ENCODE measurements at regions of chr11 and their contacts with region 1.

Region 1: GRCh38 chr11:65477149-65477965 is 21.5 kb upstream of the MALAT1 start:
- DNase-seq: peak; percentile 96 to 98 (median 96)
- H3K4me3 ChIP-seq: peak overlapping the region; percentile 81 to 88 (median 82)
- H3K4me3 Mint-ChIP-seq: peak overlapping the region; percentile 93 to 94
- H3K27ac ChIP-seq: peak overlapping the region; percentile 97 to 100
- H3K27ac Mint-ChIP-seq: peak overlapping the region; percentile 98 to 100 (median 99)
- H3K4me1 ChIP-seq: peaks cover 39 to 50% of the 10 kb centered on the region in 2 donors
- H3K4me1 Mint-ChIP-seq: peaks cover 37% of the 10 kb centered on the region
- H3K27me3 ChIP-seq: no peaks in the 10 kb centered on the region
- H3K27me3 Mint-ChIP-seq: peaks cover 0 to 7% (median 2%) of the 10 kb centered on the region in 3 donors
- CTCF ChIP-seq: no peak

Region 2: GRCh38 chr11:65491614-65492386 is 14.4 kb after region 1 on chr11:
- intact Hi-C with region 1: loop called (anchors 2 kb)
- DNase-seq: peak; percentile 64 to 89 (median 81)
- H3K4me3 ChIP-seq: peak overlapping the region in 1 of 3 experiments; percentile 54
- H3K4me3 Mint-ChIP-seq: peak overlapping the region; percentile 75 to 83
- H3K27ac ChIP-seq: peak overlapping the region; percentile 96 to 97
- H3K27ac Mint-ChIP-seq: peak overlapping the region in 6 of 7 donors; percentile 96 to 99 (median 99)
- H3K4me1 ChIP-seq: peaks cover 84 to 95% of the 10 kb centered on the region in 2 donors
- H3K4me1 Mint-ChIP-seq: peaks cover 79% of the 10 kb centered on the region
- H3K27me3 ChIP-seq: no peaks in the 10 kb centered on the region
- H3K27me3 Mint-ChIP-seq: peaks cover 0 to 3% (median 2%) of the 10 kb centered on the region in 3 donors
- CTCF ChIP-seq: no peak

Region 3: DNA sequence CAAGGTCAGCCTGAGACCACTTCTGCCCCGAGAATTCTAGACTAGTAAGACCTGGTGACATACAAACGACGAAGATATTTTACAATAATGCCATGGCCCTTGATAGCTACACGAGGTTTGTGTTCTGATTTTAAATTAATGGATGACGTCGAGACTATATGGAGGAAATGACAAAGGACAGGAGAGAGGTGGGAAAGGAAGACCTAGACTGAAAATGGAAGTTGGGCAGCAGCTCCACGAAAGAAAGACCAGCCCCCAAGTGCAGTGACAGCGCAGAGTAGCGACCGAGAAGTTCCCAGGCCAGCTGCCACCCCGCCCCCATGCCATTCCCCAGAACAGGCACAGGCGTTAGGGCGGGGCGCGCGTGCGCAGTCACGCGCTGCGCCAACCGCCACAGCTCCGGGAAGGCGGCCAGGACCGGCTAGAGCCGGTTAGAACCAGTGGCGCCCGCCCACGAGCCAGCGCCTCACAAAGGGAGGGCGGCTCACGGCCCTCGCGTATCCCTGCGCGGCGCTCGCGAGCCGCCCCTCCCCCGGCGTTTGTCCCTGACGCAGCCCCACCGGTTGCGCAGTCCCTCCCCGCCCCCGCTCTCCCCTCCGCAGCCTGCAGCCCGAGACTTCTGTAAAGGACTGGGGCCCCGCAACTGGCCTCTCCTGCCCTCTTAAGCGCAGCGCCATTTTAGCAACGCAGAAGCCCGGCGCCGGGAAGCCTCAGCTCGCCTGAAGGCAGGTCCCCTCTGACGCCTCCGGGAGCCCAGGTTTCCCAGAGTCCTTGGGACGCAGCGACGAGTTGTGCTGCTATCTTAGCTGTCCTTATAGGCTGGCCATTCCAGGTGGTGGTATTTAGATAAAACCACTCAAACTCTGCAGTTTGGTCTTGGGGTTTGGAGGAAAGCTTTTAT is 20.0 kb after region 1 on chr11:
- intact Hi-C with region 1: loop called (anchors 2 kb)
- DNase-seq: peak; percentile 99
- H3K4me3 ChIP-seq: peak overlapping the region; percentile 96 to 100 (median 99)
- H3K4me3 Mint-ChIP-seq: peak overlapping the region; percentile 82 to 90
- H3K27ac ChIP-seq: peak overlapping the region; percentile 98
- H3K27ac Mint-ChIP-seq: peak overlapping the region in 5 of 7 donors; percentile 96 to 98 (median 98)
- H3K4me1 ChIP-seq: peaks cover 47 to 55% of the 10 kb centered on the region in 2 donors
- H3K4me1 Mint-ChIP-seq: peaks cover 40% of the 10 kb centered on the region
- H3K27me3 ChIP-seq: no peaks in the 10 kb centered on the region
- H3K27me3 Mint-ChIP-seq: no peaks in the 10 kb centered on the region
- CTCF ChIP-seq: no peak

Region 4: DNA sequence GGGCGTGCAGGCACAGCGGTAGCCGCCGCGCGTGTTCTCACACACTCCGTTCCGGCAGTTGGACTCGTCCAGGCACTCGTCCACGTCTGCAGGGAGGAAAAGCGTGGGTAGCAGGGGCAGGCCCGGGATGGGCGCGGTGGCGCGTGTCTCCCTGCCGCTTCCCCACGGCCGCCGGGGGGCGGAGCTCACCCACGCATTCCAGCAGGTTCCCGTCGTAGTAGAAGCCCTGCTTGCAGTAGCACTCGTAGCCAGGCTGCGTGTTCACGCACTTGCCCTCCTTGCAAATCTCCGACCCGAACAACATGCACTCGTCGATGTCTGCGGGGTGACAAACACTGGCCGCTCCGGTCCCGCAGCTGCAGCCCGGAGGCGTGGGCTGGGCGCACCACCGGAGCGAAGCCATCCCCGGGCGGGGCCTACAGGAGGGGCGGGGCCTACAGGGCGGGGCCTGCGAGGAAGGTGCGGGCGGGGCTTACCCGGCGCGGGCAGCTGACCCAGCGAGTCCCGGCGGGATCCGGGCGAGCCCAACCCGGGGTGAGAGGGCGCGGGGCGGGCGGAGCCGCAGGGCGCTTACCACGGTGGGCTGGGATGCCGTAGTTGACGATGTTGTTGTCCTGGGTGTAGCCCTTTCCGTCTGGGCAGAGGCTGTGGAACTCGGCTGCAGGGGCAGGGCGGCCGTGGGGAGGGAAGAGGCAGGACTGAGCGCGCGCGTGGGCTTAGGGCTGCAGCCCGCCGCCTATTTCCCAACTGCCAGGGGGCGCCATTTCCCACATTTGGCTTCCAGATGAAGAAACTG is 63.1 kb after region 1 on chr11:
- intact Hi-C with region 1: no loop called
- DNase-seq: peak; percentile 85 to 86 (median 85)
- H3K4me3 ChIP-seq: peak overlapping the region; percentile 48 to 90 (median 51)
- H3K4me3 Mint-ChIP-seq: peak overlapping the region; percentile 82 to 86
- H3K27ac ChIP-seq: peak overlapping the region; percentile 20 to 49
- H3K27ac Mint-ChIP-seq: peak overlapping the region; percentile 21 to 88 (median 85)
- H3K4me1 ChIP-seq: peaks cover 11 to 27% of the 10 kb centered on the region in 2 donors
- H3K4me1 Mint-ChIP-seq: peaks cover 13% of the 10 kb centered on the region
- H3K27me3 ChIP-seq: no peaks in the 10 kb centered on the region
- H3K27me3 Mint-ChIP-seq: peaks cover 5 to 8% (median 5%) of the 10 kb centered on the region in 3 donors
- CTCF ChIP-seq: peak; percentile 80

Measured in CD14-positive monocyte (primary cell).